ENCODE measurements at regions of chr11 and their contacts with region 1.

Region 1: DNA sequence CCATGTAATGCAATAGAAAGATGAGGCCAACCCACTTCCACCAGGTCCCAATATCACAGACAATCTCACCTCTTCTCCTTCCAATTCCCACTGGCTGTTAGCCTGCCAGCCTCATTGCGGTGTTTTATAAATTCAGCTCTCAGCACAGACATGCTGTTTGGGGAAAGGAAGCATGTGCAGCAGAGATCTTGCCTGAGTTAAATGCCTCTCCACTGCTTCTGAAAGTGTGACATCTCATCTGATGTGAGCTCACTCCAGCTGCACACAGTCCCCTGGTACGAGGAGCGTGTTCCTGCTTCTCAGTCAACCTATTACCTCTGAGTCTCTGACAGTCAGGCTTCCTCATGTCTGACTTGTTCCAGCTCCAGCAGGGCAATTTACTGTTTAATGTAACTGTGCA is 122.7 kb upstream of the GUCY1A2 start:
- DNase-seq: no peak
- ATAC-seq: no peak
- H3K4me3 ChIP-seq: no peak overlapping the region
- H3K27ac ChIP-seq: no peak overlapping the region
- H3K4me1 ChIP-seq: no peaks in the 10 kb centered on the region
- H3K27me3 ChIP-seq: no peaks in the 10 kb centered on the region
- CTCF ChIP-seq: no peak

Region 2: DNA sequence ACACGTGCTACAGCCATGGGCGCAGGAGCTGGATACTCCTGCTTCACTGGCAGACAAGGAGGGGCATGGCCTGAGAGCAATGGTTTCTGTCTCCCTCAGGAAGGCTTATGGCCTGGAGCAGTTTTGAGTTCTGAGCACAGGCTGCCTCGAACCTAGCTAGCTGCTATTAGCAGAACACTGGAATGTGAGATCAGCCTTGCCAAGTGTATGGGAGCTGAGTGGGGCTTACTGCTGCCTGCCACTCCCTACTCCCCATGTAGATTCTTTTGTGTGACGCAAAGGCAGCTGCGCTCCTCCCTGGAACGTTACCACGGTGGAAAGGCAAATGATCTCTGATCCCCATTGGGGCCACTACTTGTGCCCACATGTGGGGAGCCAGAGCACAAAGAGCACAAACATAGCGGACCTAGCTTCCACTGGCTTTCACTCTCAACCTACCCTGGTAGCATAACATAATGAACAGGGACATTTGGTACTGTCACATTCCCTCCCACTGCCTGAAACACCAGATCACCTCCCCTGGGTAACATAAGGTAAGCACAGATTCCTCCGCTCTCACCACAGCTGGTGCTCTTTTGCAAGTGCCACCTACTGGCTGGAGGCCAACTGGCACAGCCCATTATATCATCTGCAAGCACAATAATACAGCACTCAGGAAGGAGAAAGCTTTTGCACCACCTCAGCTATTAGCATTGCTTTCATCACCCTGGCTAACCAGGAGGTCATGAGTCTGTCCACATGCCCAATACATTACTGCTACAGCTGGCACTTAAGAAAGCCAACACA is 38.1 kb before region 1 on chr11:
- intact Hi-C with region 1: loop called in 1 of 10 experiments (anchors 2 kb)
- DNase-seq: peak in 1 of 2 donors; percentile 30
- ATAC-seq: peak in 3 of 8 donors; percentile 31 to 64 (median 52)
- H3K4me3 ChIP-seq: no peak overlapping the region
- H3K27ac ChIP-seq: no peak overlapping the region
- H3K4me1 ChIP-seq: no peaks in the 10 kb centered on the region
- H3K27me3 ChIP-seq: no peaks in the 10 kb centered on the region
- CTCF ChIP-seq: no peak

Region 3: GRCh38 chr11:107151158-107151557 is 10.2 kb after region 1 on chr11:
- intact Hi-C with region 1: loop called in 1 of 10 experiments (anchors 1 kb)
- DNase-seq: no peak
- ATAC-seq: no peak
- H3K4me3 ChIP-seq: no peak overlapping the region
- H3K27ac ChIP-seq: no peak overlapping the region
- H3K4me1 ChIP-seq: no peaks in the 10 kb centered on the region
- H3K27me3 ChIP-seq: no peaks in the 10 kb centered on the region
- CTCF ChIP-seq: no peak

Measured in heart right ventricle (tissue), 16 donors.